HCT116 (cell line): ENCODE measurements at regions of chr11 and their contacts with region 1.

Region 1: GRCh38 chr11:6362873-6363678 is 27.2 kb upstream of the SMPD1 start:
- DNase-seq: peak; percentile 68
- ATAC-seq: peak; percentile 100
- H3K4me3 ChIP-seq: no peak overlapping the region
- H3K27ac ChIP-seq: no peak overlapping the region
- H3K4me1 ChIP-seq: peaks cover 0 to 6% of the 10 kb centered on the region in 2 experiments; a peak in 1 of 4 replicates
- H3K27me3 ChIP-seq: no peaks in the 10 kb centered on the region
- CTCF ChIP-seq: peak; percentile 79 to 98 (median 90)
- POLR2A ChIP-seq: no peak
- RAD21 ChIP-seq: peak; percentile 93

Region 2: DNA sequence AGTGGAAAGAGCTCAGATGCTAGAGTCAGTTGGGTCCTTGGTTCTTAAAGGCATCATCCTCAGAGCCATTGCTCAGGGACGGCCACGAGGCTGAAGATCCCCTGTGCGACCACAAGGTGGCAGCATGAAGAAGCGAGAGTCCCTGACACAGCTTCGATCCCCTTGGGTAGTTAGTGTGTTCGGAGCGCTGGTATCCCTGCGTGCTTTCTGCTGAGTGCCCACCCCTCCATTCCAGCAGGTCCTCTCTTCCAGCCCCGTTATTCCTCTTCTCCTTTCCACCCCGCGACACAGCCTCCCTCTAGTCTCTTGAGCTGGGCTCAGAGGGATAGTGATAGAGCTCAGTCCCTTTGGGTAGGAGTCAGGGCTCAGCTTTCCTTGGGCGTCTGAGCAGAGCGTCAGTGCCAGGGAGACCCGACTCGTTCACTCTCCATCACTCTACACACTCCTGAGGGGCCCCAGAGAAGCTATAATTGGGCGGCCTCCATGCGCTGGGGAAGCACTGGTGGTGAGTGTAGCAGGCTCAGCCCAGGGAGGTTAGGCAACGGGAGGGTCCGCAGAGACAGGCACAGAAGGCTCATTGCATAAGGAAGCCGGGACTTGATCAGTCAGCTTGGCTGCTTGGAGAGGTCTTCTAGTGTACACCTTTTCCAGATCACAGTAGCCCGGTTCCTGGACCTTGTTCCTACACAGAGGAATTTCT is 1726.0 kb before region 1 on chr11 and contains the start of gene OR51D1:
- CTCF ChIA-PET with region 1: interaction called, 13 read pairs
- POLR2A ChIA-PET with region 1: no interaction called
- RAD21 ChIA-PET with region 1: no interaction called
- intact Hi-C with region 1: no loop called
- DNase-seq: peak; percentile 43
- ATAC-seq: peak; percentile 98
- H3K4me3 ChIP-seq: no peak within 1 kb of the TSS
- H3K27ac ChIP-seq: no peak within 1 kb of the TSS
- H3K4me1 ChIP-seq: no peaks in the 10 kb centered on the region
- H3K27me3 ChIP-seq: peaks cover 43% of the 10 kb centered on the region
- CTCF ChIP-seq: peak; percentile 44 to 88 (median 81); a peak in 5 of 6 replicates
- POLR2A ChIP-seq: no peak
- RAD21 ChIP-seq: peak; percentile 73
- total RNA-seq, gene OR51D1: not detected

Region 3: DNA sequence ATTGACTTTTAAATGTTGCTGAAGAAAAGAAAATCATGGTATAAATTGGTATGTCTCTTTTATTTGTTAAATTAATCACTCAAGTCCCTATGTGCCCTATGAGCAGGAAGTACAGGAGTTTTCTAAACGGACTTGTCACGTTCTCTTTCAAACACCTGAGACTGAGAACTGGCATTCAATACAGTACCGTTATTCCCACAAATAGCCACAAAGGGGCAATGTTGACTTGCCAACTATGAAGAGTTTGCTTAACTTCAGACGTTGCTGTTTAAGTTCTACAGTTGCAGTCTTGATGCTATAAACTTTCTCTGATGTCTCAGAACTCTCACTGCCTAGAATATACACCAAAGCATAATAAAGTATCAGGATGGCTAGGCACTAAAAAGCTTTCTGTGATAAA is 340.1 kb before region 1 on chr11:
- CTCF ChIA-PET with region 1: interaction called, 24 read pairs
- POLR2A ChIA-PET with region 1: no interaction called
- RAD21 ChIA-PET with region 1: interaction called, 3 to 5 read pairs
- intact Hi-C with region 1: no loop called
- DNase-seq: peak; percentile 33
- ATAC-seq: peak; percentile 77
- H3K4me3 ChIP-seq: no peak overlapping the region
- H3K27ac ChIP-seq: no peak overlapping the region
- H3K4me1 ChIP-seq: no peaks in the 10 kb centered on the region
- H3K27me3 ChIP-seq: peaks cover 62% of the 10 kb centered on the region
- CTCF ChIP-seq: peak; percentile 32 to 55 (median 43); a peak in 4 of 6 replicates
- POLR2A ChIP-seq: no peak
- RAD21 ChIP-seq: peak; percentile 68

Region 4: GRCh38 chr11:6285019-6285418 is 78.1 kb before region 1 on chr11:
- CTCF ChIA-PET with region 1: interaction called, 12 read pairs
- POLR2A ChIA-PET with region 1: no interaction called
- RAD21 ChIA-PET with region 1: no interaction called
- intact Hi-C with region 1: no loop called
- DNase-seq: no peak
- ATAC-seq: no peak
- H3K4me3 ChIP-seq: no peak overlapping the region
- H3K27ac ChIP-seq: no peak overlapping the region
- H3K4me1 ChIP-seq: peaks cover 0 to 10% of the 10 kb centered on the region in 2 experiments; a peak in 3 of 4 replicates
- H3K27me3 ChIP-seq: peaks cover 43% of the 10 kb centered on the region
- CTCF ChIP-seq: no peak
- POLR2A ChIP-seq: no peak
- RAD21 ChIP-seq: no peak

Region 5: GRCh38 chr11:6315811-6316425 is 47.2 kb before region 1 on chr11:
- CTCF ChIA-PET with region 1: interaction called, 18 read pairs
- POLR2A ChIA-PET with region 1: no interaction called
- RAD21 ChIA-PET with region 1: no interaction called
- intact Hi-C with region 1: no loop called
- DNase-seq: peak; percentile 41
- ATAC-seq: peak; percentile 69
- H3K4me3 ChIP-seq: no peak overlapping the region
- H3K27ac ChIP-seq: no peak overlapping the region
- H3K4me1 ChIP-seq: peaks cover 14 to 27% of the 10 kb centered on the region in 2 experiments
- H3K27me3 ChIP-seq: no peaks in the 10 kb centered on the region
- CTCF ChIP-seq: peak; percentile 84 to 95 (median 93); a peak in 5 of 6 replicates
- POLR2A ChIP-seq: no peak
- RAD21 ChIP-seq: peak; percentile 81